CD8-positive, alpha-beta T cell (primary cell): ENCODE measurements at regions of chr20 and their contacts with region 1.

Region 1: GRCh38 chr20:14632906-14633305 is 295.5 kb upstream of the FLRT3 start:
- DNase-seq: no peak
- ATAC-seq: no peak
- H3K4me3 ChIP-seq: no peak overlapping the region
- H3K4me3 Mint-ChIP-seq: no peak overlapping the region
- H3K27ac ChIP-seq: no peak overlapping the region
- H3K27ac Mint-ChIP-seq: no peak overlapping the region
- H3K4me1 ChIP-seq: no peaks in the 10 kb centered on the region
- H3K4me1 Mint-ChIP-seq: no peaks in the 10 kb centered on the region
- H3K27me3 ChIP-seq: no peaks in the 10 kb centered on the region
- H3K27me3 Mint-ChIP-seq: no peaks in the 10 kb centered on the region
- CTCF ChIP-seq: no peak

Region 2: GRCh38 chr20:14570811-14571210 is 62.1 kb before region 1 on chr20:
- CTCF ChIA-PET with region 1: no interaction called
- POLR2A ChIA-PET with region 1: no interaction called
- intact Hi-C with region 1: loop called in 1 of 2 experiments (anchors 10 kb)
- DNase-seq: no peak
- ATAC-seq: no peak
- H3K4me3 ChIP-seq: no peak overlapping the region
- H3K4me3 Mint-ChIP-seq: no peak overlapping the region
- H3K27ac ChIP-seq: no peak overlapping the region
- H3K27ac Mint-ChIP-seq: no peak overlapping the region
- H3K4me1 ChIP-seq: no peaks in the 10 kb centered on the region
- H3K4me1 Mint-ChIP-seq: no peaks in the 10 kb centered on the region
- H3K27me3 ChIP-seq: no peaks in the 10 kb centered on the region
- H3K27me3 Mint-ChIP-seq: no peaks in the 10 kb centered on the region
- CTCF ChIP-seq: no peak